ENCODE measurements at regions of chr10 and their contacts with region 1.

Region 1: GRCh38 chr10:69639291-69640195 is 9.5 kb downstream of the FAM241B start:
- DNase-seq: peak; percentile 57 to 87 (median 66)
- ATAC-seq: peak; percentile 81
- H3K4me3 ChIP-seq: no peak overlapping the region
- H3K4me3 Mint-ChIP-seq: no peak overlapping the region
- H3K27ac ChIP-seq: no peak overlapping the region
- H3K27ac Mint-ChIP-seq: no peak overlapping the region
- H3K4me1 ChIP-seq: no peaks in the 10 kb centered on the region
- H3K4me1 Mint-ChIP-seq: no peaks in the 10 kb centered on the region
- H3K27me3 ChIP-seq: no peaks in the 10 kb centered on the region
- H3K27me3 Mint-ChIP-seq: no peaks in the 10 kb centered on the region
- CTCF ChIP-seq: peak; percentile 88

Region 2: GRCh38 chr10:69425511-69426298 is 213.8 kb before region 1 on chr10:
- CTCF ChIA-PET with region 1: no interaction called
- POLR2A ChIA-PET with region 1: no interaction called
- intact Hi-C with region 1: loop called in 1 of 2 experiments (anchors 5 kb)
- DNase-seq: peak in 12 of 14 experiments; percentile 16 to 89 (median 40)
- ATAC-seq: peak; percentile 92
- H3K4me3 ChIP-seq: no peak overlapping the region
- H3K4me3 Mint-ChIP-seq: peak overlapping the region; percentile 16
- H3K27ac ChIP-seq: peak overlapping the region; percentile 74 to 88
- H3K27ac Mint-ChIP-seq: peak overlapping the region; percentile 82
- H3K4me1 ChIP-seq: peaks cover 67% of the 10 kb centered on the region
- H3K4me1 Mint-ChIP-seq: peaks cover 61% of the 10 kb centered on the region
- H3K27me3 ChIP-seq: no peaks in the 10 kb centered on the region
- H3K27me3 Mint-ChIP-seq: no peaks in the 10 kb centered on the region
- CTCF ChIP-seq: no peak

Region 3: GRCh38 chr10:69515699-69516259 is 123.8 kb before region 1 on chr10:
- CTCF ChIA-PET with region 1: interaction called, 70 read pairs
- POLR2A ChIA-PET with region 1: interaction called, 10 read pairs
- intact Hi-C with region 1: loop called (anchors 1 kb)
- DNase-seq: peak; percentile 71 to 90 (median 76)
- ATAC-seq: peak; percentile 99
- H3K4me3 ChIP-seq: no peak overlapping the region
- H3K4me3 Mint-ChIP-seq: no peak overlapping the region
- H3K27ac ChIP-seq: no peak overlapping the region
- H3K27ac Mint-ChIP-seq: no peak overlapping the region
- H3K4me1 ChIP-seq: no peaks in the 10 kb centered on the region
- H3K4me1 Mint-ChIP-seq: no peaks in the 10 kb centered on the region
- H3K27me3 ChIP-seq: no peaks in the 10 kb centered on the region
- H3K27me3 Mint-ChIP-seq: peaks cover 36% of the 10 kb centered on the region
- CTCF ChIP-seq: peak; percentile 82

Region 4: DNA sequence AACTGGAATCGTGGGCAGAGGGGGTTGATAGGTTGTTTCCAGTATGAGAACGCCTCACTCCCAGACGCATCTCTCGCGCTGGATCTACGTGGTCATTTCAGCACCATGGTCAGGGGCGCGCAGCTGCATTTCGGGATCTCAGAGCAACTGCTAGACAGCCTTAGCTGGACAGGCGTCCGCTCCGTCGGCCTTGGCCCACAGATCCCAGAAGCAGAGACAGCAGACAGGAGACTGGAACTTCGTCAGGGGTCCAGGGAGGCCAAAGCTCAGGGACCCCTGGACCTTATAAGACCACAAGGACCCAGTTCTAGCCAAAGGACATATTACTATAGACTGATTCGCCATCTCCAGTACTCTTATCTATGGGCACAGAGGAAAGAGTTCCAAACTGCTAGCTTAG is 71.6 kb before region 1 on chr10:
- CTCF ChIA-PET with region 1: no interaction called
- POLR2A ChIA-PET with region 1: no interaction called
- intact Hi-C with region 1: loop called in 1 of 2 experiments (anchors 10 kb)
- DNase-seq: peak in 4 of 14 experiments; percentile 9 to 41 (median 16)
- ATAC-seq: no peak
- H3K4me3 ChIP-seq: no peak overlapping the region
- H3K4me3 Mint-ChIP-seq: no peak overlapping the region
- H3K27ac ChIP-seq: no peak overlapping the region
- H3K27ac Mint-ChIP-seq: no peak overlapping the region
- H3K4me1 ChIP-seq: peaks cover 20% of the 10 kb centered on the region
- H3K4me1 Mint-ChIP-seq: peaks cover 18% of the 10 kb centered on the region
- H3K27me3 ChIP-seq: peaks cover 66 to 77% of the 10 kb centered on the region in 2 experiments
- H3K27me3 Mint-ChIP-seq: peaks cover 88% of the 10 kb centered on the region
- CTCF ChIP-seq: no peak

Region 5: GRCh38 chr10:69716711-69717560 is 77.4 kb after region 1 on chr10:
- CTCF ChIA-PET with region 1: no interaction called
- POLR2A ChIA-PET with region 1: no interaction called
- intact Hi-C with region 1: loop called (anchors 5 to 10 kb)
- DNase-seq: peak; percentile 29 to 69 (median 40)
- ATAC-seq: no peak
- H3K4me3 ChIP-seq: no peak overlapping the region
- H3K4me3 Mint-ChIP-seq: no peak overlapping the region
- H3K27ac ChIP-seq: no peak overlapping the region
- H3K27ac Mint-ChIP-seq: no peak overlapping the region
- H3K4me1 ChIP-seq: no peaks in the 10 kb centered on the region
- H3K4me1 Mint-ChIP-seq: no peaks in the 10 kb centered on the region
- H3K27me3 ChIP-seq: peaks cover under 1 to 5% of the 10 kb centered on the region in 2 experiments
- H3K27me3 Mint-ChIP-seq: peaks cover 7% of the 10 kb centered on the region
- CTCF ChIP-seq: peak; percentile 65

Measured in CD4-positive, alpha-beta T cell (primary cell).